ENCODE measurements at regions of chr17 and their contacts with region 1.

Region 1: GRCh38 chr17:29241015-29241963 is 5.4 kb upstream of the CRYBA1 start:
- DNase-seq: peak; percentile 45 to 89 (median 87)
- H3K4me3 ChIP-seq: no peak overlapping the region
- H3K27ac ChIP-seq: peak overlapping the region; percentile 40 to 74 (median 57)
- H3K4me1 ChIP-seq: peaks cover 4 to 28% of the 10 kb centered on the region in 2 donors
- H3K27me3 ChIP-seq: no peaks in the 10 kb centered on the region
- CTCF ChIP-seq: no peak
- POLR2A ChIP-seq: no peak

Region 2: GRCh38 chr17:28811651-28812090 is 429.6 kb before region 1 on chr17:
- intact Hi-C with region 1: no loop called
- DNase-seq: no peak
- H3K4me3 ChIP-seq: peak overlapping the region; percentile 32 to 87 (median 80)
- H3K27ac ChIP-seq: peak overlapping the region in 4 of 5 donors; percentile 73 to 94 (median 90)
- H3K4me1 ChIP-seq: peaks cover 19 to 37% of the 10 kb centered on the region in 2 donors
- H3K27me3 ChIP-seq: no peaks in the 10 kb centered on the region
- CTCF ChIP-seq: no peak
- POLR2A ChIP-seq: no peak

Region 3: DNA sequence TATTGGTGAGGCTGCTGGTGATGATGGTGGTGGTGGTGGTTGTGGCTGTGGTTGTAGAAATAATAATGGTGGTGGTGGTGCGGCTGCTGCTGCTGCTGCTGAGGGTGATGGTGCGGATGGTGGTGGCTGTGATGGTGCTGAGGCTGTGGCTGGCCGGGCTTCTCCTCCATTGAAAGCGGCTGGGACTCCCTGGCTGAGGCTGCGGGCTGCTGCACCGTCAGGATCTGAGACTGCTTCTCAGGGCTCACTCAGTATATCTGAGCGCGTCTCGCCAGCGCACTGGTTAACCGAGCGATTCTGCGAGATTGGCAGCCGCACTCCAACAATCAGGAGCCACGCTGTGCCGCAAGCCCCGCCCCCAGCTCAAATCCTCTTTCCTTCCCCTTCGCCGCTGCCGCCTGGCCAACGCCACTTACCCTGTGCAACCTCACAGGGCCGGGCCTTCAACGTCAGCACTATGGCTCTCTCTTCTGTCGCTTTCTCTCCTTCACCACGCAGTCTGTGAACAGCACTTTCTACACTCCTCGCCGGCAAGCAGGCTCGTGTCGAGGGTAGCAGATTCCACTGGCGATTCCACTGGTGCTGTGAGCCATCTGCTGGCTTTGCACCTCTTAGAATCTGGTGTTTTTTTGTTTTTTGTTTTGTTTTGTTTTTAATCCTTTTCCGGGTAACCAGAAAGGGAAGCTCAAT is 52.7 kb after region 1 on chr17 and contains the start of gene NUFIP2:
- intact Hi-C with region 1: loop called in 1 of 2 experiments (anchors 10 kb)
- DNase-seq: peak; percentile 99 to 100 (median 100)
- H3K4me3 ChIP-seq: peak within 1 kb of the TSS; percentile 60 to 94 (median 90)
- H3K27ac ChIP-seq: peak within 1 kb of the TSS; percentile 97 to 99 (median 99)
- H3K4me1 ChIP-seq: peaks cover 23 to 35% of the 10 kb centered on the region in 2 donors
- H3K27me3 ChIP-seq: no peaks in the 10 kb centered on the region
- CTCF ChIP-seq: peak in 2 of 6 experiments; percentile 4 to 24
- POLR2A ChIP-seq: peak; percentile 100
- total RNA-seq, gene NUFIP2: 22.2 to 84.5 (median 46.9) TPM

Measured in adrenal gland (tissue), 19 donors.